B cell (primary cell): ENCODE measurements at regions of chr19 and their contacts with region 1.

Region 1: GRCh38 chr19:55503502-55504251 is 15.4 kb downstream of the SSC5D start:
- DNase-seq: peak; percentile 98
- ATAC-seq: peak; percentile 96
- H3K4me3 ChIP-seq: peak overlapping the region in 4 of 5 experiments; percentile 67 to 71 (median 69)
- H3K4me3 Mint-ChIP-seq: peak overlapping the region; percentile 93
- H3K27ac ChIP-seq: peak overlapping the region; percentile 91 to 94
- H3K27ac Mint-ChIP-seq: peak overlapping the region; percentile 94
- H3K4me1 ChIP-seq: peaks cover 4 to 16% of the 10 kb centered on the region in 2 donors
- H3K4me1 Mint-ChIP-seq: peaks cover 16% of the 10 kb centered on the region
- H3K27me3 ChIP-seq: no peaks in the 10 kb centered on the region
- H3K27me3 Mint-ChIP-seq: no peaks in the 10 kb centered on the region
- CTCF ChIP-seq: peak; percentile 99

Region 2: DNA sequence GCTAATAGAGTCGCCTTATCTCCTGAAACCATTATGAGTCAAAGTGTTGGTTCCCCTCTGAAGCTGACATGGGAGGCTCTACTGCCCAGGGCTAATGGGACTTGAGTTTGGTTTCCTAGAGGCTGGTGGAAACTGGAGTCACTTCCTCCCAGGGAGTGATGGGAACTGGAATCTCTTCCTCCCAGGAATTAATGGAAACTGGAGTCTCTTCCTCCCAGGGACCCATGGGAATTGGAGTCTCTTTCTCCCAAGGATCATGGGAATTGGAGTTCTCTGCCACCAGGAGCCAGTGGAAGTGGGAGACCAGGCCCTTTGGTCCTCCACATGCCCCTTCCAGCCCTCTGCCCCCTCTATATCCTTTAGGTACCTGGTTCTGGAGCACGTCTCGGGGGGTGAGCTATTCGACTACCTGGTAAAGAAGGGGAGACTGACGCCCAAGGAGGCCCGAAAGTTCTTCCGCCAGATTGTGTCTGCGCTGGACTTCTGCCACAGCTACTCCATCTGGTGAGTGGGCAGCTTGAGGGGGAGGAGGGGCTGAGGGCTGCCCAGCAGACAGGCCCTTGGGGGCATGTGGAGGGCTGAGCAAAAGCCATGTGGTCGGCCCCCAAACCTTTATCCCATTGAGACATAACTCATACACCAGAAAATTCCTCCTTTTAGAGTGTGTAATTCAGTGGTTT is 214.4 kb before region 1 on chr19:
- CTCF ChIA-PET with region 1: interaction called, 25 read pairs
- POLR2A ChIA-PET with region 1: no interaction called
- intact Hi-C with region 1: no loop called
- DNase-seq: no peak
- ATAC-seq: no peak
- H3K4me3 ChIP-seq: no peak overlapping the region
- H3K4me3 Mint-ChIP-seq: no peak overlapping the region
- H3K27ac ChIP-seq: no peak overlapping the region
- H3K27ac Mint-ChIP-seq: no peak overlapping the region
- H3K4me1 ChIP-seq: peaks cover 4 to 6% of the 10 kb centered on the region in 2 donors
- H3K4me1 Mint-ChIP-seq: peaks cover 5% of the 10 kb centered on the region
- H3K27me3 ChIP-seq: no peaks in the 10 kb centered on the region
- H3K27me3 Mint-ChIP-seq: no peaks in the 10 kb centered on the region
- CTCF ChIP-seq: no peak

Region 3: GRCh38 chr19:55461259-55461973 is 42.3 kb before region 1 on chr19 and contains the start of gene ISOC2:
- CTCF ChIA-PET with region 1: interaction called, 70 read pairs
- POLR2A ChIA-PET with region 1: no interaction called
- intact Hi-C with region 1: loop called (anchors 2 kb)
- DNase-seq: peak; percentile 100
- ATAC-seq: peak; percentile 97
- H3K4me3 ChIP-seq: peak within 1 kb of the TSS; percentile 56 to 98 (median 90)
- H3K4me3 Mint-ChIP-seq: peak within 1 kb of the TSS; percentile 87
- H3K27ac ChIP-seq: peak within 1 kb of the TSS; percentile 73 to 78
- H3K27ac Mint-ChIP-seq: peak within 1 kb of the TSS; percentile 81
- H3K4me1 ChIP-seq: peaks cover 10 to 14% of the 10 kb centered on the region in 2 donors
- H3K4me1 Mint-ChIP-seq: peaks cover 20% of the 10 kb centered on the region
- H3K27me3 ChIP-seq: no peaks in the 10 kb centered on the region
- H3K27me3 Mint-ChIP-seq: no peaks in the 10 kb centered on the region
- CTCF ChIP-seq: no peak
- total RNA-seq, gene ISOC2: 10.0 and 11.1 TPM in 2 replicates

Region 4: GRCh38 chr19:55476100-55476775 is 27.4 kb before region 1 on chr19 and contains the start of gene ZNF628:
- CTCF ChIA-PET with region 1: interaction called, 45 read pairs
- POLR2A ChIA-PET with region 1: interaction called, 5 read pairs
- intact Hi-C with region 1: loop called (anchors 2 kb)
- DNase-seq: peak; percentile 99
- ATAC-seq: peak; percentile 90
- H3K4me3 ChIP-seq: peak within 1 kb of the TSS; percentile 63 to 97 (median 77)
- H3K4me3 Mint-ChIP-seq: peak within 1 kb of the TSS; percentile 95
- H3K27ac ChIP-seq: peak within 1 kb of the TSS; percentile 69 to 92
- H3K27ac Mint-ChIP-seq: peak within 1 kb of the TSS; percentile 97
- H3K4me1 ChIP-seq: peaks cover 15 to 21% of the 10 kb centered on the region in 2 donors
- H3K4me1 Mint-ChIP-seq: peaks cover 34% of the 10 kb centered on the region
- H3K27me3 ChIP-seq: no peaks in the 10 kb centered on the region
- H3K27me3 Mint-ChIP-seq: no peaks in the 10 kb centered on the region
- CTCF ChIP-seq: no peak
- total RNA-seq, gene ZNF628: 13.3 and 15.5 TPM in 2 replicates

Region 5: DNA sequence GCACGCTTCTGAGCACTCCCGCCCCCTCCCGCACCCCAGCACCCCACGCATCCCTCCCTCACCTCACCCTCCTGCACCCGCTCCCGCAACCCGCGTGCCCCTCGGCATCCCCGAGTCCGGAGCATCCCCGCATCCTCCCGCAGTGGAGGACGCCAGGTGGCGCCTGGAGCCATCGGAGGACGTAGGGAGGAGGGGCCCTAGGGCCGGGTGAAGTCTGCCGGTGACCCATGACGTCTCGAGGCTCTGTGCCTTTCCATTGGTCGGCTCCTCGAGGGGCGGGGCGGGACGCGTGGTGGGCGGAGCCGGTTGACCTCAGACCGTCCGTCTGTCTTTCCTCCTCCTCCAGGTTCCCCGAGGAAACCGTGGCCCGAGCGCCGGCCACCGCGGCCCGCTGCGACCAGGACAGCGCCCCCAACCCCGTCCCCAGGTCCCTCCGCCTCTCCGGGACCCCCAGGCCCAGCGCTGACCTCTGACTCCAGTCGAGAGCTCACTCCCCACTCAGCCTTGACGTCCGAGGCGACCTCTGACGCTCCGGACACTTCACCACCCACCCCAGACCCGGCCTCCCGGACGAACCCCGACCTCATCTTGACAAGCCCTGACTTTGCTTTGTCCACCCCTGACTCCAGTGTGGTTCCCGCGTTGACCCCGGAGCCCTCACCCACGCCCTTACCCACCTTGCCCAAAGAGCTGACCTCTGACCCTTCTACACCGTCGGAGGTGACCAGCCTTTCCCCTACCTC is 13.4 kb after region 1 on chr19:
- CTCF ChIA-PET with region 1: interaction called, 22 read pairs
- POLR2A ChIA-PET with region 1: no interaction called
- intact Hi-C with region 1: loop called (anchors 1 kb)
- DNase-seq: peak; percentile 94
- ATAC-seq: peak; percentile 100
- H3K4me3 ChIP-seq: peak overlapping the region in 4 of 5 experiments; percentile 53 to 60 (median 58)
- H3K4me3 Mint-ChIP-seq: peak overlapping the region; percentile 88
- H3K27ac ChIP-seq: peak overlapping the region; percentile 91 to 93
- H3K27ac Mint-ChIP-seq: peak overlapping the region; percentile 84
- H3K4me1 ChIP-seq: peaks cover 4 to 11% of the 10 kb centered on the region in 2 donors
- H3K4me1 Mint-ChIP-seq: peaks cover 9% of the 10 kb centered on the region
- H3K27me3 ChIP-seq: peaks cover 0 to 8% (median 0%) of the 10 kb centered on the region in 4 experiments
- H3K27me3 Mint-ChIP-seq: peaks cover 8% of the 10 kb centered on the region
- CTCF ChIP-seq: peak; percentile 81